Activated naive CD4-positive, alpha-beta T cell treated with anti-CD3 and anti-CD28 coated beads, Interleukin-2, amount 10 ng/mL, durations not matched to agents 7 days and 5 days (primary cell): ENCODE measurements at regions of chr12 and their contacts with region 1.

Region 1: GRCh38 chr12:42469355-42470175 is 120.0 kb downstream of the PRICKLE1 start:
- DNase-seq: peak; percentile 27
- H3K4me3 Mint-ChIP-seq: peak overlapping the region; percentile 54
- H3K27ac Mint-ChIP-seq: peak overlapping the region; percentile 9
- H3K4me1 Mint-ChIP-seq: peaks cover 20% of the 10 kb centered on the region
- H3K27me3 Mint-ChIP-seq: peaks cover 28% of the 10 kb centered on the region

Region 2: DNA sequence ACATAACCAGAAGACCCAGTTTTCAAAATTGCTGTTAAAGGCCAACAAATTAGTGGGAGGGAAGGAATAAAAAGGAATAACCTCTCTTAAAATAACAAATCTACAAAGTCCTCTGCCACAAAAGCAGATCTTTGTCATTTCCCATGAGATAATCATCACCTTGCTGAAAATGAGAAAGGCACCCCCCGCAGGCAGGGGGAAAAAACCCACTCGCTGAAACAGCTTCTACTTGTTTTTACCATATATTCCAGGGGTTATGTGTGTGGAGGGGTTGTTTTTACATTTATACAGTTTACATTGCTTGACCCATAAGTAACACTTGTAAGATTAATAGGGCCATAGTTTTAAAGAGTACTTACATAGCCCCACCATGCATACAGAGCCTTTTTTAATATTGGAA is 11.0 kb before region 1 on chr12:
- CTCF ChIA-PET with region 1: no interaction called
- DNase-seq: no peak
- H3K4me3 Mint-ChIP-seq: no peak overlapping the region
- H3K27ac Mint-ChIP-seq: no peak overlapping the region
- H3K4me1 Mint-ChIP-seq: no peaks in the 10 kb centered on the region
- H3K27me3 Mint-ChIP-seq: peaks cover 3% of the 10 kb centered on the region

Region 3: DNA sequence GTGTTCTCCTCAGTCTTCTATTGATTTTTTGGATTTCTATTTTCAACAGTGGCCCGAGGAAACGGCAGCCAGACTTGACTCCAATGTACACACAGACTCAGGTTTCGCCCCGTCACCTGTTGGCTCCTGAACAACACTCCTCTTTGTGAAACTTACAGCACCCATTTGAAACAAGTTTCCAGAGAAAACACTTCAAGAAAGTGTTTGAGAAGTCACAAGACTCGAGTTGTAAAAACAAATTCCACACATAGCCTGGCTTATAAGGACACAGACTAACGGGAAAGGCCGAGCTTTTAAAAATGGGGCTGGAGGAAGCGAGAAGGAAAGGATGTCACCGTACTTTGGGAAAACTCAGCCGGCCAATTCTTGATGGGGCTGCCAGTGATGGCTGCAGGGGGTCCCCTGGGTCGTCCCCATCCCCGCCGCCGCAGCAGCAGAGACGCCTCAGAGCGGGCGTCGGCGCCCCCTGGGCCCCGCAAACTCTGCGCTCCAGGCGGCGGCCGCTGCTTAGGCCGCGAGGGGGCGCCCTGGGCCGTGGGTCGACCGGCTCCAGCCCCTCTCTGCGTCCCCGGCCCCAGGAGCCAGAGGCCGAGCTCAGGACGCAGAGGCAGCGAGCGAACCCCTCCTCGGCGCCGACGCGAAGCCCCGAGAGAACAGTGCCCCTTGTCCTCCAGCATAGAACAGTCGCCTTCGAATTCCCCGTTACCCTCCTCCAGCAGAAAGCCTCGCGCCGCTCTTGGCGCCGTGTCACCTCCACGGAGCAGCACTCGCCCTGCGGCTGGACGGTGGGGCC is 13.1 kb after region 1 on chr12:
- CTCF ChIA-PET with region 1: interaction called, 22 read pairs
- DNase-seq: peak; percentile 52
- H3K4me3 Mint-ChIP-seq: peak overlapping the region; percentile 52
- H3K27ac Mint-ChIP-seq: no peak overlapping the region
- H3K4me1 Mint-ChIP-seq: peaks cover 13% of the 10 kb centered on the region
- H3K27me3 Mint-ChIP-seq: peaks cover 64% of the 10 kb centered on the region

Region 4: DNA sequence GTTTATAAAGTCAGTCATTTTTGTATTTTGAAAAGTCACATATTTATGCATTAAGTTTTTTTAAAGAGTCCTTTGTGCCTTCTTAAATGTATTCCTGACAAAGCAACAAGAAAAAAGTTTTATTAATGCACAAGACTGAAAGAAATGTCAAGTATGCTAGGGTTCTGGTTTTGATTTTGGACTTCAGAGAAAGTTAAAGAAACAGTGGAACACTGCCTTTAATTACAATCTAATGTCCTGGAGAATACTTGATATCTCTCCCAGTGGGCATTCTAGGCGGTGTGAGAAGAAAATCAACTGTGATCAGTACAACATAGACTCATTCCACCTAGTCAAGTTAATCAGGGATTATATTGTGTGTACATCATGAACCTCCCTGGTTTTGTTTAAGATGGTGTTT is 70.1 kb after region 1 on chr12:
- CTCF ChIA-PET with region 1: no interaction called
- DNase-seq: no peak
- H3K4me3 Mint-ChIP-seq: no peak overlapping the region
- H3K27ac Mint-ChIP-seq: no peak overlapping the region
- H3K4me1 Mint-ChIP-seq: no peaks in the 10 kb centered on the region
- H3K27me3 Mint-ChIP-seq: peaks cover 4% of the 10 kb centered on the region